ENCODE measurements at regions of chr4 and their contacts with region 1.

Region 1: DNA sequence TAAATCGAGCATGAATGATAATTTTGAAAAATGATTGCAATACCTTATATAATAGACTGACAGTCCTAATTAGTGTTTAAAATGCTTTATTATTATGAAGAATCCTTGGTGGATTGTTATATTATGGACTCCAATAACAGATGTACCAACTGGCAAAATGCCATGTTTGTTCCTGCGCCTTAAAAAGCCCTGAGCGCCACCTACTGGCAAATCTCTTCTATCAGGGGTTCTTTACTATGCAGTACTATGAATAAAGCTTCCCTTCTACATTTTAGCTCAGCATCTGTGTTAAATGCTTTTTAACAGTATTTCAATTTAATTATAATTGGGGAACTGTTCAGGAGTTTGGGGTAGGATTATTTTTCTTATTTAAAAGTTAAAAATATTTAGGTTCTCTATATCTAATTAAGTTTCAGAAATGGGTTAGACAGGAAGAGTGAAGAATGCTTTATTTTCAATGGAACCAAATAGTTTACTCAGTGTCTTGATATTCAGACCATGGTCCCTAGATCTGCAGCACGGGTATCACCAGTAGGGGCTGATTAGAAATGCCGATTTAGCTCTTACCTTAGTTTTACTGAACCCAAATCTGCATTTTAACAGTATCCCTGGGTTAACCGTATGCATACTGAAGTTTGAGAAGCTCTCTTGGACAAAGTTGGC is 20.1 kb downstream of the CFAP97 start:
- DNase-seq: peak; percentile 85
- ATAC-seq: peak; percentile 69
- H3K4me3 ChIP-seq: no peak overlapping the region
- H3K4me3 Mint-ChIP-seq: no peak overlapping the region
- H3K27ac ChIP-seq: no peak overlapping the region
- H3K27ac Mint-ChIP-seq: no peak overlapping the region
- H3K4me1 ChIP-seq: no peaks in the 10 kb centered on the region
- H3K4me1 Mint-ChIP-seq: peaks cover 6% of the 10 kb centered on the region
- H3K27me3 ChIP-seq: no peaks in the 10 kb centered on the region
- H3K27me3 Mint-ChIP-seq: no peaks in the 10 kb centered on the region
- CTCF ChIP-seq: peak; percentile 92

Region 2: GRCh38 chr4:185039508-185040273 is 144.1 kb before region 1 on chr4:
- CTCF ChIA-PET with region 1: interaction called, 69 read pairs
- POLR2A ChIA-PET with region 1: no interaction called
- intact Hi-C with region 1: loop called (anchors 1 kb)
- DNase-seq: peak; percentile 73
- ATAC-seq: peak; percentile 86
- H3K4me3 ChIP-seq: no peak overlapping the region
- H3K4me3 Mint-ChIP-seq: peak overlapping the region; percentile 16
- H3K27ac ChIP-seq: no peak overlapping the region
- H3K27ac Mint-ChIP-seq: no peak overlapping the region
- H3K4me1 ChIP-seq: peaks cover 0 to 5% of the 10 kb centered on the region in 2 donors
- H3K4me1 Mint-ChIP-seq: peaks cover 5% of the 10 kb centered on the region
- H3K27me3 ChIP-seq: peaks cover 0 to 3% (median 0%) of the 10 kb centered on the region in 4 experiments
- H3K27me3 Mint-ChIP-seq: peaks cover 28% of the 10 kb centered on the region
- CTCF ChIP-seq: peak; percentile 87

Region 3: DNA sequence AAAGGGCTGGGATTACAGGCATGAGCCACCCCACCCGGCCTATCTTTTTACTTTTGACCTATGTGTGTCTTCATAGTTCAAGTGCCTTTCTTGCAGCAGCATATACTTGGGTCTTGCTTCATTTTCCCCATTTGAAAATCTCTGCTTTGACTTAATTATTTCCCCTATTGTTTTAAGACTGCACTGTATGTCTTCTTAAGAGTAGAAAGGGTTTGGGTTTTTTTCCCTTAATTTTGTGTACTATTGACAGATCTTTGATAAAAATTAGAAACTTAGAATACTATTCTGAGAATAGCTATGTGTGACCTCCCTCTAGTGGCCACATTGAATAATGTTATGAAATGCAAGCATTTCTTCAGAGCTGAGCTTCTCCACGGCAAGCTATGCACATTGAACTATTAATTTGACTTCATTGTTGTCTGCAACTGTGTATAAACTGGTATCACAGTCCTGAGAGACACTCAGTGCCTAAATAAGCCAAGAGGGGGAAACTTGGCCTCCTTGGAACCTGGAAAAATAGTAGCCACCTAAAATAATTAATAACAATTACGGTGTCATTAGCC is 49.4 kb before region 1 on chr4:
- CTCF ChIA-PET with region 1: interaction called, 12 read pairs
- POLR2A ChIA-PET with region 1: no interaction called
- intact Hi-C with region 1: no loop called
- DNase-seq: peak; percentile 66
- ATAC-seq: peak; percentile 69
- H3K4me3 ChIP-seq: no peak overlapping the region
- H3K4me3 Mint-ChIP-seq: no peak overlapping the region
- H3K27ac ChIP-seq: no peak overlapping the region
- H3K27ac Mint-ChIP-seq: no peak overlapping the region
- H3K4me1 ChIP-seq: no peaks in the 10 kb centered on the region
- H3K4me1 Mint-ChIP-seq: no peaks in the 10 kb centered on the region
- H3K27me3 ChIP-seq: peaks cover 0 to 6% (median 3%) of the 10 kb centered on the region in 4 experiments
- H3K27me3 Mint-ChIP-seq: peaks cover 24% of the 10 kb centered on the region
- CTCF ChIP-seq: peak; percentile 94

Region 4: GRCh38 chr4:185171373-185172071 is 12.2 kb before region 1 on chr4:
- CTCF ChIA-PET with region 1: interaction called, 22 read pairs
- POLR2A ChIA-PET with region 1: no interaction called
- intact Hi-C with region 1: no loop called
- DNase-seq: peak; percentile 21
- ATAC-seq: no peak
- H3K4me3 ChIP-seq: peak overlapping the region in 1 of 5 experiments; percentile 27
- H3K4me3 Mint-ChIP-seq: peak overlapping the region; percentile 1
- H3K27ac ChIP-seq: peak overlapping the region; percentile 46 to 70
- H3K27ac Mint-ChIP-seq: peak overlapping the region; percentile 27
- H3K4me1 ChIP-seq: peaks cover 10 to 13% of the 10 kb centered on the region in 2 donors
- H3K4me1 Mint-ChIP-seq: peaks cover 12% of the 10 kb centered on the region
- H3K27me3 ChIP-seq: no peaks in the 10 kb centered on the region
- H3K27me3 Mint-ChIP-seq: no peaks in the 10 kb centered on the region
- CTCF ChIP-seq: no peak

Region 5: DNA sequence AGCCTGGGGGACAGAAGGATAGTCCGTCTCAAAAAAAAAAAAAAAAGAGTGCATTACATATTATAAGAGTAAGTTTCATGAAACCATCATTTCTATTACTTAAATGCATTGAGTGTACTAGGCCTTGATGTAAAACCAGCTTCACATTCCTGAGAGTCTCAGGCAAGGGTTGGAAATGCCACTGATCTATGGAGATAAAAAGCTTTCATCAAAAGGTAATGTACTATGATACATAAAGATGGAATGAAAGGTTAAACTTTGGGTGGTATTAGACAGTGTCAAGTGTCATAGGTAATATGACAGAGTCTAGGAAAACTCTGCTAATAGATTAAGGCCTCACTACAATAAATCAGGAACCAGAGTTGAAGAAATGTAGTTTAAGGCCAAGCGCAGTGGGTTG is 12.7 kb after region 1 on chr4:
- CTCF ChIA-PET with region 1: interaction called, 24 read pairs
- POLR2A ChIA-PET with region 1: no interaction called
- intact Hi-C with region 1: no loop called
- DNase-seq: no peak
- ATAC-seq: no peak
- H3K4me3 ChIP-seq: no peak overlapping the region
- H3K4me3 Mint-ChIP-seq: no peak overlapping the region
- H3K27ac ChIP-seq: no peak overlapping the region
- H3K27ac Mint-ChIP-seq: peak overlapping the region; percentile 41
- H3K4me1 ChIP-seq: peaks cover 7 to 8% of the 10 kb centered on the region in 2 donors
- H3K4me1 Mint-ChIP-seq: peaks cover 22% of the 10 kb centered on the region
- H3K27me3 ChIP-seq: no peaks in the 10 kb centered on the region
- H3K27me3 Mint-ChIP-seq: no peaks in the 10 kb centered on the region
- CTCF ChIP-seq: no peak

Region 6: DNA sequence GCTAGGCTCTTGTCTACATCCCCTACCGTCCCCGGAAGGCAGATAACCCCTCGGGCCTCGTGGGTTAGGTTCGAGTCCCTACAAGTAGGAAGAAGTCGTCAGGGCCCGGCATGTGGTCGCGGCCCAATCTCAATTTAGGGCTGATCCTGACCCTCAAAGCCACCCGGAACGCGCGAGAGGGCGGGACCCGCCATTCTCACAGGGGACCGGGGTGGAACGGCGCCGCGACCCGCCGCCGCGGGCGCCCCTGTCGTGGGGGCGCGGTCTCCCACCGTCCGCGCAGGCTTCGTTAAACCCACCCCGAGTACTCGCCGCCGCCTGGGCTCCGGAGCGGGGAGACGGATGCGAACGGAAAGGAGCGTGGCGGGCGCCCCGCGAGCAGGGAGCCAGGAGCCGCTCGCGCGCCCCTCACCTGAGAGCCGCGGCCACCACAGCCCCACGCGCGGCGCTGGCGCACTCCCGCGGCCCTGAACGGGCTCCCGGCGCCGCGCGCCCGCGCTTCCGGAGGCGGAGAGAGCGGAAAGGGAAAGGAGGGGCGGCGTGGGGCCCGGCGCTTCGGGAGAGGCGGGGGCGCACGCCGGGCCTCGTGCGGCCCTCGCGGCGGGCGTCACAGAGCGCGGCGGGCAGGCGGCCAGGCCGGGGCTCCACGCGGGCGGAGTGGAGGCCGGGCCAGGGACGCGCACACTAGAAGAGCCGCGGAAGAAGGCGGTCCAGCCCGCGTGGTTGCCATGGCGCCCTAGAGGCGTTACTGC is 19.9 kb after region 1 on chr4 and contains the start of gene CFAP97:
- CTCF ChIA-PET with region 1: interaction called, 24 read pairs
- POLR2A ChIA-PET with region 1: no interaction called
- intact Hi-C with region 1: loop called (anchors 2 kb)
- DNase-seq: peak; percentile 90
- ATAC-seq: peak; percentile 81
- H3K4me3 ChIP-seq: peak within 1 kb of the TSS; percentile 58 to 73 (median 71)
- H3K4me3 Mint-ChIP-seq: peak within 1 kb of the TSS; percentile 97
- H3K27ac ChIP-seq: peak within 1 kb of the TSS; percentile 76 to 90
- H3K27ac Mint-ChIP-seq: peak within 1 kb of the TSS; percentile 98
- H3K4me1 ChIP-seq: peaks cover 31 to 45% of the 10 kb centered on the region in 2 donors
- H3K4me1 Mint-ChIP-seq: peaks cover 45% of the 10 kb centered on the region
- H3K27me3 ChIP-seq: no peaks in the 10 kb centered on the region
- H3K27me3 Mint-ChIP-seq: no peaks in the 10 kb centered on the region
- CTCF ChIP-seq: peak; percentile 10
- total RNA-seq, gene CFAP97: 32.0 and 32.4 TPM in 2 replicates

Region 7: DNA sequence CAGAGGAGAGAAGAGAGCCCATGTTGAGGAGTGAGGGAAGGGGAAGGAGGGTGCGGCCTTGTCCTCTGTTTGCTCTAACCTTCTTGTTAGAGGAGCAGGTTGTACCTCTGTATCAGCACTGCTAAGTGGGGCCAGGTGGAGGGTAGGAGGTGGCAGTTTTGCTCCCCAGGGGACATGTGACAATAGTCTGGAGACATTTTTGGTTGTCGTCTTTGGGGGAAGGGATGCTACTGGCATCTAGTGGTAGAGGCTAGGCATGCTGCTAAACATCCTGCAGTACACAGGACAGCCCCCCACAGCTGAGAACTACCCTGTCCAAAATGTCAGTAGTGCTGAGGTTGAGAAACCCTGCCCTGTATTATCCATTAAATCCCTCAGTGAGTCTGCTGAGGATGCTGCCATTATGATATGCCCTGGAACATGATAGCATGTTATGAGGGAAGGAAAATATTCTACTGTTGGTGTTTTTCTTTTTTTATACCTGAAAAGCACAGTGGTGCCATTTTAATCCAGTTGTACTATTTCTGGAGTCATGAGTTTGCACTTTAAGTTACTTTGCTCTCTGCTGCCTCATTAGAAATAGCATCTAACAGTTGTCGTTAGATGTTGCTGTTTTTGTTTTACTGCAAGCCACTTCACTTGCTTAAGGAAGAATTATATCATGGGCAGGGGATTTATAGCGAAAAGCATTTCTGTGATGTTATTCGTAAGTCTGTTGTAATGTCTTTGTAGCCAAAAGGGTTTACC is 121.4 kb after region 1 on chr4:
- CTCF ChIA-PET with region 1: interaction called, 13 read pairs
- POLR2A ChIA-PET with region 1: no interaction called
- intact Hi-C with region 1: no loop called
- DNase-seq: peak; percentile 75
- ATAC-seq: peak; percentile 88
- H3K4me3 ChIP-seq: no peak overlapping the region
- H3K4me3 Mint-ChIP-seq: no peak overlapping the region
- H3K27ac ChIP-seq: no peak overlapping the region
- H3K27ac Mint-ChIP-seq: peak overlapping the region; percentile 4
- H3K4me1 ChIP-seq: peaks cover 18 to 30% of the 10 kb centered on the region in 2 donors
- H3K4me1 Mint-ChIP-seq: peaks cover 36% of the 10 kb centered on the region
- H3K27me3 ChIP-seq: no peaks in the 10 kb centered on the region
- H3K27me3 Mint-ChIP-seq: no peaks in the 10 kb centered on the region
- CTCF ChIP-seq: peak; percentile 70

Measured in B cell (primary cell).